ENCODE measurements at regions of chr1 and their contacts with region 1.

Region 1: DNA sequence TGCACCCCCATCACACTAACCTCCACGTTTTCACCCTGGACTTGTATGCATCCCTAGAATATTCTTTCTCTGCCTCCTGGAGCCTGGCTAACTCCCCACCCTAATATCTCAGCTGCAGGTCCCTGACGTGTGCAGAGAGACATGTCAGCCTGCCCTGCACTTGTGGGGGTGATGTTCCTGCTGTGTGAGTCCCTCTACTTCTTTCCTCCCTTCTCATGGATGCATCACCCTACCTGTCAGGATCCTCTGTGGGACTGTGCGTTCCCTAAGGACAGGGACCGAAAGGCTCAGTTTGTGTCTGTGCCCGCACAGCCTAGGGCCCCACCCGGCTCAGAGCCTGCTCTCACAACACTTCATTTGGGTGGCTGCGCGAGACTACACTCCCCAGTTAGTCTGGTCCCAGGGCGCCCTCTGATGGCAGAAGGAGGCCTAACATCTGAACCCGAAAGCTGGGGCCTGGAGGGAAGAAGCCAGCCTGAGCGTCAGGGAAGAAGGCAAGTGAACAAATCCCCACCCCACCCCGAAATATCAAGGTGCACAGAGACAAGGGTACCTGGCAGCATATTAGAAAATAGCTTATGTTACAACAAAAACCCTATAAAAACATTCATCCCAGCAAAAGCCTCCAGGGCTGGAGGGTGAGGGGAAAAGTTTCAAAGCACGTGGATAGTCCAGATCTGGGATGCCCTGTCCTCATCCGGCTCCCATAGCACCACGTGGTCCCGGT is 3.7 kb downstream of the CD52 start:
- DNase-seq: peak; percentile 81 to 98 (median 93)
- ATAC-seq: peak; percentile 66 to 78 (median 75)
- H3K4me3 ChIP-seq: peak overlapping the region; percentile 41 to 89
- H3K4me3 Mint-ChIP-seq: peak overlapping the region; percentile 88 to 99 (median 99)
- H3K27ac ChIP-seq: peak overlapping the region; percentile 44
- H3K27ac Mint-ChIP-seq: peak overlapping the region; percentile 95 to 99
- H3K4me1 ChIP-seq: peaks cover 26 to 51% of the 10 kb centered on the region in 2 experiments
- H3K4me1 Mint-ChIP-seq: peaks cover 48 to 60% (median 58%) of the 10 kb centered on the region in 3 donors
- H3K27me3 ChIP-seq: no peaks in the 10 kb centered on the region
- H3K27me3 Mint-ChIP-seq: no peaks in the 10 kb centered on the region

Region 2: GRCh38 chr1:26279456-26280332 is 41.8 kb before region 1 on chr1 and contains the start of gene SH3BGRL3:
- CTCF ChIA-PET with region 1: interaction called, 20 to 23 read pairs
- POLR2A ChIA-PET with region 1: interaction called in 1 of 2 experiments, 3 read pairs
- DNase-seq: peak; percentile 62 to 92 (median 78)
- ATAC-seq: peak; percentile 64 to 79 (median 71)
- H3K4me3 ChIP-seq: peak within 1 kb of the TSS; percentile 82 to 92
- H3K4me3 Mint-ChIP-seq: peak within 1 kb of the TSS; percentile 87 to 94 (median 90)
- H3K27ac ChIP-seq: peak within 1 kb of the TSS; percentile 73
- H3K27ac Mint-ChIP-seq: peak within 1 kb of the TSS; percentile 97 to 99
- H3K4me1 ChIP-seq: peaks cover 39 to 91% of the 10 kb centered on the region in 2 experiments
- H3K4me1 Mint-ChIP-seq: peaks cover 80 to 90% (median 84%) of the 10 kb centered on the region in 3 donors
- H3K27me3 ChIP-seq: no peaks in the 10 kb centered on the region
- H3K27me3 Mint-ChIP-seq: no peaks in the 10 kb centered on the region
- total RNA-seq, gene SH3BGRL3: 218 to 457 (median 370) TPM

Region 3: GRCh38 chr1:26306290-26307229 is 14.9 kb before region 1 on chr1 and contains the start of gene UBXN11:
- CTCF ChIA-PET with region 1: interaction called in 1 of 2 experiments, 9 read pairs
- POLR2A ChIA-PET with region 1: interaction called, 4 to 10 read pairs
- DNase-seq: peak; percentile 75 to 96 (median 90)
- ATAC-seq: peak; percentile 94 to 98 (median 98)
- H3K4me3 ChIP-seq: peak within 1 kb of the TSS; percentile 74 to 79
- H3K4me3 Mint-ChIP-seq: peak within 1 kb of the TSS; percentile 95 to 99 (median 99)
- H3K27ac ChIP-seq: peak within 1 kb of the TSS; percentile 67
- H3K27ac Mint-ChIP-seq: peak within 1 kb of the TSS; percentile 97 to 99
- H3K4me1 ChIP-seq: peaks cover 28 to 42% of the 10 kb centered on the region in 2 experiments
- H3K4me1 Mint-ChIP-seq: peaks cover 30 to 37% (median 32%) of the 10 kb centered on the region in 3 donors
- H3K27me3 ChIP-seq: no peaks in the 10 kb centered on the region
- H3K27me3 Mint-ChIP-seq: no peaks in the 10 kb centered on the region
- total RNA-seq, gene UBXN11: 39.5 to 112 (median 104) TPM